ENCODE measurements at regions of chr20 and their contacts with region 1.

Region 1: GRCh38 chr20:407133-407952 is 756 bp upstream of the RBCK1 start:
- DNase-seq: peak; percentile 85
- H3K4me3 Mint-ChIP-seq: peak overlapping the region; percentile 85
- H3K27ac Mint-ChIP-seq: peak overlapping the region; percentile 95
- H3K4me1 Mint-ChIP-seq: peaks cover 55% of the 10 kb centered on the region
- H3K27me3 Mint-ChIP-seq: no peaks in the 10 kb centered on the region

Region 2: DNA sequence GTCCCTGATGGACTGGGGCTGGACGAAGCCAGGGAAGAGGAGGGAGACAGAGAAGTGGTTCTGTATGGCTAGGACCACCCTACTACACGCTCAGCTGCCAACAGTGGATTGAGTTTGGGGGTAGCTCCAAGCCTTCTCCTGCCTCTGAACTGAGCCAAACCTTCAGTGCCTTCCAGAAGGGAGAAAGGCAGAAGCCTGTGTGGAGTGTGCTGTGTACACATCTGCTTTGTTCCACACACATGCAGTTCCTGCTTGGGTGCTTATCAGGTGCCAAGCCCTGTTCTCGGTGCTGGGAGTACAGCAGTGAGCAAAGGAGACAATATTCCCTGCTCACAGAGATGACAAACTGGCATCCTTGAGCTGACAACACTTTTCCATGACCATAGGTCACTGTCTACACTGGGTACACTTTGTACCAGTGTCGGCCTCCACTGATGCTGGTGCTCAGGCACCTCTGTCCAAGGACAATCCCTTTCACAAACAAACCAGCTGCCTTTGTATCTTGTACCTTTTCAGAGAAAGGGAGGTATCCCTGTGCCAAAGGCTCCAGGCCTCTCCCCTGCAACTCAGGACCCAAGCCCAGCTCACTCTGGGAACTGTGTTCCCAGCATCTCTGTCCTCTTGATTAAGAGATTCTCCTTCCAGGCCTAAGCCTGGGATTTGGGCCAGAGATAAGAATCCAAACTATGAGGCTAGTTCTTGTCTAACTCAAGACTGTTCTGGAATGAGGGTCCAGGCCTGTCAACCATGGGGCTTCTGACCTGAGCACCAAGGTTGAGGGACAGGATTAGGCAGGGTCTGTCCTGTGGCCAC is 10.5 kb before region 1 on chr20:
- CTCF ChIA-PET with region 1: no interaction called
- DNase-seq: no peak
- H3K4me3 Mint-ChIP-seq: no peak overlapping the region
- H3K27ac Mint-ChIP-seq: no peak overlapping the region
- H3K4me1 Mint-ChIP-seq: peaks cover 12% of the 10 kb centered on the region
- H3K27me3 Mint-ChIP-seq: no peaks in the 10 kb centered on the region

Region 3: GRCh38 chr20:478949-479429 is 71.6 kb after region 1 on chr20:
- CTCF ChIA-PET with region 1: interaction called, 10 read pairs
- DNase-seq: peak; percentile 45
- H3K4me3 Mint-ChIP-seq: no peak overlapping the region
- H3K27ac Mint-ChIP-seq: peak overlapping the region; percentile 79
- H3K4me1 Mint-ChIP-seq: peaks cover 51% of the 10 kb centered on the region
- H3K27me3 Mint-ChIP-seq: no peaks in the 10 kb centered on the region

Region 4: GRCh38 chr20:517221-517620 is 109.9 kb after region 1 on chr20:
- CTCF ChIA-PET with region 1: no interaction called
- DNase-seq: no peak
- H3K4me3 Mint-ChIP-seq: no peak overlapping the region
- H3K27ac Mint-ChIP-seq: no peak overlapping the region
- H3K4me1 Mint-ChIP-seq: peaks cover 6% of the 10 kb centered on the region
- H3K27me3 Mint-ChIP-seq: no peaks in the 10 kb centered on the region

Measured in activated naive CD4-positive, alpha-beta T cell treated with anti-CD3 and anti-CD28 coated beads, Interleukin-2, amount 10 ng/mL, durations not matched to agents 7 days and 5 days (primary cell).